Panc1 (cell line): ENCODE measurements at regions of chr6 and their contacts with region 1.

Region 1: DNA sequence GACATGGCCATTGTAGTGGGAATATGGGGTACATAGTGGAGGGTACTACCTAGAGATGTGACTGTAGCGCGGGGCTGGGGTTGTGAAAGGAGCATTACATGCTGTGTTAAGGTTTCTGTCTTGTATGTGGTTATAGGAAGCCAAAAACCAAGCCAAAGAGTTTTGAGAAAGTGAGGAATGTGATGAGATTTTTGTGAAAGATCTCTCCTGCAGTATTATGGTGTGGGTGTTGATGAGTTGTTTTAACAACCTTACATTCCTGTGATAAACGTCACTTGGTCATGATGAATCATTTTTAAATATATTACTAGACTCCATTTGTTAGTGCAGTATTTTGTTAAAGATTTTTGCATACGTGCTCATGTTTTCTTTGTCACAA is 48.9 kb downstream of the ZFAND3 start:
- DNase-seq: no peak
- ATAC-seq: peak; percentile 74
- H3K4me3 ChIP-seq: no peak overlapping the region
- H3K27ac ChIP-seq: no peak overlapping the region
- H3K4me1 ChIP-seq: peaks cover 20% of the 10 kb centered on the region
- H3K27me3 ChIP-seq: no peaks in the 10 kb centered on the region
- CTCF ChIP-seq: no peak

Region 2: GRCh38 chr6:37762806-37763205 is 105.6 kb before region 1 on chr6:
- CTCF ChIA-PET with region 1: no interaction called
- POLR2A ChIA-PET with region 1: interaction called, 10 read pairs
- in situ Hi-C with region 1: no loop called
- intact Hi-C with region 1: no loop called
- DNase-seq: no peak
- ATAC-seq: no peak
- H3K4me3 ChIP-seq: no peak overlapping the region
- H3K27ac ChIP-seq: no peak overlapping the region
- H3K4me1 ChIP-seq: no peaks in the 10 kb centered on the region
- H3K27me3 ChIP-seq: no peaks in the 10 kb centered on the region
- CTCF ChIP-seq: no peak

Region 3: DNA sequence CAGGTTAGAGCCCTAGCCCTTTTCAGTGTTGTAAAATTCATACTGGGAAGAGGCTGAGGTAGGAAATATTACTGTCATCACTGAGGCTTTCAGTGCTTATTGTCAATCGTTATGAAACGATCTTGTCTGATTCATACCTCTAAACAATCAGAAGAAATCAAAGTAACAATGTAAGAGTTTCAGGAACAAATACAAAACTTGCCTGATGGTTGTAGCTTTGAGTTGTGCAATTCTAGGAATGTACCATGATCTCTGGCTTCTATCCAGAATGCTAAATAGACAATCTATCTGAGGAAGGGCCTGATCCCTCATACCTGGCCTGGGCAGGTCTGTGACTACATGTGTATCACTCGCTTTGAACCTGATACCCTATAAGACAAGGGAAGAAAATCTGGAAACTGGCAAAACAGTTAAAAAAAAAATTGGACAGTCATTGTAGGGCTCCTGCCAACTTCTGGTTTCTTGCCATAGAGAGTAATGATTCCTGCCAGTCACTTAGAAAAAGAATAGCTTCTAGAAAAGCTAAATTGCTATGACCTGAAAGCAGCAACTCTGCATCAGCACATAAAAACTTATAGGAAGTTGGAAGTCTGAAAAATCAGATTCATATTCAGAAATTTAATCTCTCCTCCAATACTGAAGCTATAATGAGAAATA is 536.6 kb after region 1 on chr6:
- CTCF ChIA-PET with region 1: no interaction called
- POLR2A ChIA-PET with region 1: no interaction called
- in situ Hi-C with region 1: no loop called
- intact Hi-C with region 1: no loop called
- DNase-seq: no peak
- ATAC-seq: no peak
- H3K4me3 ChIP-seq: no peak overlapping the region
- H3K27ac ChIP-seq: no peak overlapping the region
- H3K4me1 ChIP-seq: no peaks in the 10 kb centered on the region; the same call in 1 of the 2 replicates
- H3K27me3 ChIP-seq: no peaks in the 10 kb centered on the region
- CTCF ChIP-seq: no peak